Activated naive CD4-positive, alpha-beta T cell treated with anti-CD3 and anti-CD28 coated beads for 36 hours (primary cell): ENCODE measurements at regions of chr12 and their contacts with region 1.

Region 1: DNA sequence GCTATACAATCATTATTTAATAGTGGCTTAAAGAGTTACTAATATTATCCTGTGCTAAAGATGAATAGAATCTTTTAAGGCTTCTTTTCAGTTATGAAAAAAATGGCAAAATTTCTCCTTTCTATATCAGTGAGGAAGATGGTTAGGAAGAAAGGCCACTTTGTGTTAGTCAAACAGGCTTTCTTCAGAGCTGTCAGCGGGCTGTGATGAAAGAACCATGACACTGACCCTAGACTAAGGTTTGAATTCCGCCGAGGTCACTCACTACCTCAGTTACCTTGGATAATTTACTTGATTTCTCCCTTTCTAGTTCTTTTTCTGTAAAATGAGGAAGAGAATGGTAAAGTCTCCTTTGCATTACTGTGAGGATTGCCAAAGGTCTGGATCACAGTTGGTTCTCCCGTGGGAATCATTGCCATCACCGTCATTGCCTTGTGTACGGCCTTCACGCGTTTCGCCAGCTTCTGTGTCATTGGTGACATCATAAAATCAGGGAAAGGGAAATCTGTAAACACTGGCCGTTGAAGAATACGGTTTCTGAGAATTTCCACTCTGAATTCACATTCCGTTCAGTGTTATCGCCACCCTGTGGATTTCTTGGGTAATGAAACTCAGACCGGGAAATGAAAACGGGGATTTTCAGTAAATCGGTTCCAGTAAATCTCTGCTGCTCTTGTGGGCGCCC is 26.7 kb upstream of the YBX3 start:
- DNase-seq: peak; percentile 85
- H3K4me3 Mint-ChIP-seq: peak overlapping the region; percentile 54
- H3K27ac Mint-ChIP-seq: no peak overlapping the region
- H3K4me1 Mint-ChIP-seq: peaks cover 10% of the 10 kb centered on the region
- H3K27me3 Mint-ChIP-seq: peaks cover 37% of the 10 kb centered on the region

Region 2: DNA sequence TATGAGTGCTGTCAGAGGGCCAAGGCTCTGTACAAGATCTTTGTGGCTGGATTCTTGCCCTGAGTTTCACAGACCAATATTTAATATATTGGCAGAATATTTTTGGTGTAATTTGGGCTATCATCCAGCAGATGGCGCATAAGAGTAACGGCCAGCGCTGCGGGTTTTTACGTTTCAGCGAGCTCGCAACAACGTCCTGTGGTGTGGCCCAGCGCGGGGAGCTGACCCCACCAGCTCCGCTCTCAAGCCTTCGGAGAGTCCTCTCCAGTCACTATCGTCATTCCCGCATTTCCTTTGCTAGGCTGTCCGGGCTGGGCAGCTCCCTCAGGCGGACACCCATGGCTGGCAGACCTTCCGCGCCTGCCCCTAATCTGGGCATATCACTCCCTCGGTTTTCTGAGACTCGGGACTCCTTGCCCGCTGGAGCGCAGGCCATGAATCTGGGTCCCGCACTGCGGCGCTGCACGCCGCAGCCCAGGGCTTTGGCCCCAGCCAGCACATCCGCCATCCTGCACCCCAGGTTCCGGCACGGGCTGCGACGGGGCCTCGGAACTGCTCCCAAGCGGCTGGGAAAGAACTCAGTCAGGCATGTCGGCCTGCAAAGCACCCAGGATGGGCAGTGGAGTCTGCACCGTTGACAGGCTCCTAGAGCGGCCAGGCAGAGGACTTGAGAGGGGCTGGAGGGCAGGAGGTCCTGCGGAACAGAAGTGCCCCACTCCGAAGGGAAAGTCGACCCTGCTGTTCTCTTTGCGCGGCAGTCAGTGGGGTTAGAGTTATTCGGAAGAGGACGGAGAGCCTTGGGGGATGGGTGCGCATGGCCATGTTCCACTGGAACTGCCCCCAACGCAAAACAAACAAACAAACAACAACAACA is 596.3 kb before region 1 on chr12:
- CTCF ChIA-PET with region 1: interaction called, 3 read pairs
- intact Hi-C with region 1: loop called (anchors 5 kb)
- DNase-seq: peak; percentile 66
- H3K4me3 Mint-ChIP-seq: peak overlapping the region; percentile 76
- H3K27ac Mint-ChIP-seq: peak overlapping the region; percentile 63
- H3K4me1 Mint-ChIP-seq: peaks cover 10% of the 10 kb centered on the region
- H3K27me3 Mint-ChIP-seq: peaks cover 18% of the 10 kb centered on the region

Region 3: DNA sequence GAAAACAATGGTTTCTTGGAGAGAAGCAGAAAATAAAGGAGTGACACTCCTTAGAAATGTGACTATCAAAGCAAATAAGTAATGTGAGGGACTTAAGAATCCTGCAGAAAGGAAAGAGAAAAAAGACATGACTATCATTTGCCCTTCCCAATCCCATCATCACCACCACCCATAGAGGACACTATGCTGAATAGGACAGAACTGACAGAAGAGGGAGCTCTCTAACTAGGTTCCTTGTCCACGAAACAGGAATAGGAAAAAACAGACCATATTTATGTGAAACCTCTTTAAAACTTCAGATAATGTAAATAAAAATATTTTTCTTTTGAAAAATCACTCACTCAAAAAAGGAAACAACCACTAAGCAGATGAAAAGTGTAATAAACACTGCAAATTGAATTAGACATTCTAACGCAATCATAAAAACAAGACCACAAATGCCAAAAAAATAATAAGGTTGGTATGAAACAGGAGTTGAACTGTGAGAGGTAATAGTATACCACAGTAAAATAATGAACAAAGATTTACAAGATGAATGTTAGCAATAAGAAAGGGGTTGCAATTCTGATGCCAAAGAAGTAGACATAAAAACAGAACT is 418.1 kb before region 1 on chr12:
- CTCF ChIA-PET with region 1: no interaction called
- intact Hi-C with region 1: loop called (anchors 1 kb)
- DNase-seq: no peak
- H3K4me3 Mint-ChIP-seq: no peak overlapping the region
- H3K27ac Mint-ChIP-seq: no peak overlapping the region
- H3K4me1 Mint-ChIP-seq: no peaks in the 10 kb centered on the region
- H3K27me3 Mint-ChIP-seq: peaks cover 4% of the 10 kb centered on the region

Region 4: DNA sequence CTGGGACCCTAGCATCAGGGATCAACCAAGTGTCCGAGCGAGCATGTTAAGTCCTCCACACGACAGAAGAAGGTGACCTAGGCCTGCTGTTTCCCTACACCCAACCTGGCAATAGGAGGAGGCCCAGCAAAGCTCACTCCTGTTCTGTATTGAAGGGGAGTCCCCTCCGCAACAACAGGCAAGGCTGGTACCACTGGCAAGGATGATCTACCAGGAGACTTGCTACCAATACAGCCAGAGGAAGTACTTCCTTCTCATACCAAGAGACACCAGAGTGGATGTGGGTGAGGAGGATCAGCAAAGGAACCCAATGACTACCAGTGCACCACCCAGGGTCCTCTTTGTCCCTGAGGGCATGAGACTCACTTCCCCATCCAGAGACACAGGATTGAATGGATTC is 301.6 kb before region 1 on chr12:
- CTCF ChIA-PET with region 1: no interaction called
- intact Hi-C with region 1: no loop called
- DNase-seq: no peak
- H3K4me3 Mint-ChIP-seq: no peak overlapping the region
- H3K27ac Mint-ChIP-seq: no peak overlapping the region
- H3K4me1 Mint-ChIP-seq: no peaks in the 10 kb centered on the region
- H3K27me3 Mint-ChIP-seq: no peaks in the 10 kb centered on the region

Region 5: GRCh38 chr12:10613349-10614055 is 136.3 kb before region 1 on chr12 and contains the start of gene MAGOHB:
- CTCF ChIA-PET with region 1: interaction called, 12 read pairs
- intact Hi-C with region 1: loop called (anchors 1 kb)
- DNase-seq: peak; percentile 99
- H3K4me3 Mint-ChIP-seq: peak within 1 kb of the TSS; percentile 99
- H3K27ac Mint-ChIP-seq: peak within 1 kb of the TSS; percentile 99
- H3K4me1 Mint-ChIP-seq: peaks cover 30% of the 10 kb centered on the region
- H3K27me3 Mint-ChIP-seq: peaks cover 2% of the 10 kb centered on the region
- total RNA-seq, gene MAGOHB: 58.8 to 61.1 TPM

Region 6: DNA sequence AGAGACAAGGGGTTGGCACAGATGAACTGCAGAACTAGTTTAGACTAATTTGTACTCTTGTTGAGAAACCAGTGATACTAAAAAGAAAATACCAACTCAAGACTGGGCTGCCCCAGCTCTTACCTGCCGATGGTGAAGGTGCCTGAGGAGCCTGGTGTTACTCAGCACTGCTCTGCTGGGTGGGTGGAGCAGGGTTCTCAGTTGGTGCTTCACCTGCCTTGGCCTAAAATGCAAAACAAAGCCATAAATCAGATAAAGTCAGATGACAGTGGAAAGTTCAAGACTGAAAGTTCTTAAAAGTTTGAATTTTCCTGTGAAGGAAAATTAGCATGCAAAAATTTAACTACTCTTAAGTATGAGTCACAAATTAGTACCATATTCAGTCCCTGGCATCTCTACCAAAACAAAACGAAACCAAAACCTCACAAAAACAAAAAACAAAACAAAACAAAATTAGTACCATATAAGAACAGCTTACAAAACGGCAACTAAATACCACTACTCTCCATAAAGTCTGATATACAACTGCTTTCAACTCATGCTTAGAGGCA is 48.6 kb before region 1 on chr12:
- CTCF ChIA-PET with region 1: interaction called, 4 read pairs
- intact Hi-C with region 1: loop called (anchors 1 kb)
- DNase-seq: peak; percentile 65
- H3K4me3 Mint-ChIP-seq: no peak overlapping the region
- H3K27ac Mint-ChIP-seq: peak overlapping the region; percentile 76
- H3K4me1 Mint-ChIP-seq: peaks cover 16% of the 10 kb centered on the region
- H3K27me3 Mint-ChIP-seq: no peaks in the 10 kb centered on the region

Region 7: GRCh38 chr12:10732549-10732948 is 17.3 kb before region 1 on chr12:
- CTCF ChIA-PET with region 1: interaction called, 11 read pairs
- intact Hi-C with region 1: no loop called
- DNase-seq: no peak
- H3K4me3 Mint-ChIP-seq: no peak overlapping the region
- H3K27ac Mint-ChIP-seq: no peak overlapping the region
- H3K4me1 Mint-ChIP-seq: peaks cover 4% of the 10 kb centered on the region
- H3K27me3 Mint-ChIP-seq: peaks cover 13% of the 10 kb centered on the region

Region 8: DNA sequence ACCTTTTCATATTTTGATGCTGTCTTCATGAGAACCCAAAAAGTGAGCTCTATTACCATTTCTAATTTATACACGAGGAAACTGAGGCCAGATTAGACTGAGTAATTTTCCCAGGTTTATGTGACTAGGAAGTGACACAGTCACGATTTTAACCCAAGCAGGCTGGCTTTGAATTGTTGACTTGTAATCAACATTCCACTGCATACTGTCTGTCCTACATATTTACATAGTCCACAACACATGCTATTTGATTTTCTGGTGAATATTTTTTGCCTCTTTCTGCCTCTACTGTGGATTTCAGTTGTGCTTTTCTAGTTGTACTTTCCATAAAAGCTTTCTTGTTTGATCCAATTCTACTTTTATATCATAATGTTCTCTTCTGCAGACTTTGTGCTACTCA is 44.4 kb after region 1 on chr12:
- CTCF ChIA-PET with region 1: no interaction called
- intact Hi-C with region 1: no loop called
- DNase-seq: no peak
- H3K4me3 Mint-ChIP-seq: no peak overlapping the region
- H3K27ac Mint-ChIP-seq: no peak overlapping the region
- H3K4me1 Mint-ChIP-seq: no peaks in the 10 kb centered on the region
- H3K27me3 Mint-ChIP-seq: peaks cover 2% of the 10 kb centered on the region

Region 9: DNA sequence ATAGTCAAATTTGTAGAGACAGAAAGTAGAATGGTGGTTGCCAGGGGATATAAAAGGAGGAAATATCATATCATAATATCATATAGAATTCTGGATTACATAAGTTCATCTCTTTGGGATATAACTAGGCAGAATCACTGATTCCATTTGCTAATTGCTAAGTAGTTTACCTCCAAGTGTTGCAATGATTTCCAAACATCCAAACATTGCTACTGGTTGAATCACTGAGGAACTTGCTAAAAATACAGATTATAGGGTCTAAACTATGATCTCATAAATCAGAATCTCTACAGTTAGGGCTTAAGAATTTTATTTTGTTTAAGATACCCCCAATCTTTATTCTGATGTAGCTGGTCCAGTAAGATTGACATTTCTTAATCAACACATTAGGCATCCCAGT is 453.0 kb after region 1 on chr12:
- CTCF ChIA-PET with region 1: interaction called, 7 read pairs
- intact Hi-C with region 1: loop called (anchors 1 kb)
- DNase-seq: no peak
- H3K4me3 Mint-ChIP-seq: no peak overlapping the region
- H3K27ac Mint-ChIP-seq: no peak overlapping the region
- H3K4me1 Mint-ChIP-seq: no peaks in the 10 kb centered on the region
- H3K27me3 Mint-ChIP-seq: no peaks in the 10 kb centered on the region